ENCODE measurements at regions of chr1 and their contacts with region 1.

Region 1: DNA sequence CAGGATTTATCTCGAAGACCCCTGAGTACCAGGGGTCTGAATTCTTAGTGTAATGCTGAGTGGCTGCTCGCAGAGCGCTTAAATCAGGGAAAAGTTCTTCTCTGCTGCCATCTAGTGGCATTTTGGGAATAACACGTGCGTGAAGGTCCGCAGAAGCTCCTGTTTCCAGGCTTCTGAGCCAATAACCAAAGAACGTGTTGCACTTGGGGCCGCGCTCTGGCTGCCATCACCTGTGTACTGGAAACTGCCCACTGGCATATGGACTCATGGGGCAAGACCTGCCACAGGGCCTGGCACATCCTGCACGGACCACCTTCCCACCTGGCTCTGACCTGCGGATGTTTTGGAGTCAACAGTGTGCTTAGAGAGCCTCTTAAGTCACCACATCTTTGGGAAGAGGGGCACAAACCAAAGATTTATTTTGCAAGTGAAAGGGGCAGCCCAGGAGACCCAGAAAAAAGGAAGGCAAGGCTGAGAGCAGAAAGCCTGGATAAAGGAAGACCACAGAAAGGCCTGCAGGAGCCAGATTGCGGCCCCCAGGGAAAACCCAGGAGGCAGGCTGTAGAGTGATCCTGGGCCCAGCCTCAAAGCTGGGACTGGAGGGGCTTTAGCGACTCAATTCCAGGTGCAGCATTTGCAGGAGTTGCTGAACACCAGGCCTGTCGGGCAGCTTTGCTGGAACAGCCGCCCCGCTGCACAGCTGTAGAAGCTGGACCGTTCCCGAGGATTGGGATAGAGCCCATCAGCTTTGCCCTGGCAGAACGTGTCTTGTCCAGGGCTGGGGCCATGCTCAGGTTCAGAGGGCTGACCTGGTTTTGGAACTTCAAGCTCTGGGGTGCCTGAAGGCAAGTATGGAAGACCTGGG is 13.0 kb downstream of the CHIT1 start:
- DNase-seq: peak; percentile 60 to 65
- ATAC-seq: peak; percentile 75 to 92
- H3K4me3 ChIP-seq: no peak overlapping the region
- H3K27ac ChIP-seq: no peak overlapping the region
- H3K4me1 ChIP-seq: no peaks in the 10 kb centered on the region
- CTCF ChIP-seq: peak; percentile 90
- EP300 ChIP-seq: no peak
- POLR2A ChIP-seq: no peak
- RAD21 ChIP-seq: peak; percentile 84 to 92

Region 2: DNA sequence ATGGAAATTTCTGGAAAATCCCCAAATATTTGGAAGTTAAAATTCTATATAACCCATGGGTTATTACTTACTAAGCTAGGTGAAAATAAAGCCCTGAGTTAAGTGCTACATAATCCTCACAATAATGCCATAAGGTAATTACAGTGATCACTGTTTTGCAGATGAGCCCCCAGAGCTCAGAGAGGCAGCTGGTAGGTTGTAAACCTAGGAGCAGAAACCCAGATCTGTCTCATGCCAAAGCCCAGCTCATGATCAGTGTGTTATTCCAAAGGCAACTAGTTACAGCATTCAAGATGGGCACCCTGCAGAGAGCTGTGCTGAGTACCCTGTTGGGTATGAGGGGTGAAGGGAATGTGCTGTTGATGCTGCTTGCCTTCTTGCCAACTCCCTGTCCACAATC is 119.9 kb before region 1 on chr1:
- CTCF ChIA-PET with region 1: interaction called, 14 read pairs
- POLR2A ChIA-PET with region 1: no interaction called
- DNase-seq: no peak
- ATAC-seq: no peak
- H3K4me3 ChIP-seq: no peak overlapping the region
- H3K27ac ChIP-seq: no peak overlapping the region
- H3K4me1 ChIP-seq: no peaks in the 10 kb centered on the region
- CTCF ChIP-seq: no peak
- EP300 ChIP-seq: no peak
- POLR2A ChIP-seq: no peak
- RAD21 ChIP-seq: no peak

Region 3: DNA sequence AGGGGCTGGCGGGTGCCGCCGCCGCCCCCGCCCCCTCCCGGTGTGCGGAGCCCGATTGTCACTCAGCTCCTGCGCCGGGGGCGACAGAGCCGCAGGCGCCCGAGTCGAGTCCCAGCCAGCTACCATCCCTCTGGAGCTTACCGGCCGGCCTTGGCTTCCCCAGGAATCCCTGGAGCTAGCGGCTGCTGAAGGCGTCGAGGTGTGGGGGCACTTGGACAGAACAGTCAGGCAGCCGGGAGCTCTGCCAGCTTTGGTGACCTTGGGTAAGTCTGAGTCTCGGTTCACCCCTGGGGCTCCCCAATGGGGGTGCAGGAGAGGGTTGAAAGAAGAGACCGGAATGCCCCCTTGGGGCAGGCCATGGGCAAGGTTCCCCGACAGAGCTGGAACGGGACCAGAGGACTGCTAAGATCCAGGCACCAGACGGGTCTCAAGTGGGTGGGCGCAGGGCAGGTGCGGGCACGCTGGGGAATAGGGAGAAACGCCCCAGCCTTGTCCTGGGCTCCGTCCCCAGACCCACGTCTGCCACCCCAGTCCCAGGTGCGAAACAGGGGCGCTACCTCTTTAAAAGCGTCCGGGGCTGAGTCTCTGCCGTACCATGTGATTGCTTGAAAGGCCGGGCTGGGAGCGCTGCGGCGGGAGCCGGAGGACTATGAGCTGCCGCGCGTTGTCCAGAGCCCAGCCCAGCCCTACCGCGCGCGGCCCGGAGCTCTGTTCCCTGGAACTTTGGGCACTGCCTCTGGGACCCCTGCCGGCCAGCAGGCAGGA is 88.7 kb before region 1 on chr1 and contains the start of gene ADORA1:
- CTCF ChIA-PET with region 1: interaction called, 39 read pairs
- POLR2A ChIA-PET with region 1: no interaction called
- DNase-seq: peak; percentile 43 to 55
- ATAC-seq: peak; percentile 88 to 93
- H3K4me3 ChIP-seq: peak within 1 kb of the TSS; percentile 41
- H3K27ac ChIP-seq: peak within 1 kb of the TSS; percentile 32 to 67; a peak in 4 of 6 replicates
- H3K4me1 ChIP-seq: peaks cover 23% of the 10 kb centered on the region; the same call in 1 of the 3 replicates
- CTCF ChIP-seq: no peak
- EP300 ChIP-seq: no peak
- POLR2A ChIP-seq: no peak
- RAD21 ChIP-seq: no peak
- polyA plus RNA-seq, gene ADORA1: 0.48 and 0.50 TPM in 2 replicates

Region 4: GRCh38 chr1:203158960-203159665 is 57.4 kb before region 1 on chr1:
- CTCF ChIA-PET with region 1: interaction called, 24 read pairs
- POLR2A ChIA-PET with region 1: no interaction called
- DNase-seq: no peak
- ATAC-seq: no peak
- H3K4me3 ChIP-seq: no peak overlapping the region
- H3K27ac ChIP-seq: no peak overlapping the region
- H3K4me1 ChIP-seq: no peaks in the 10 kb centered on the region
- CTCF ChIP-seq: no peak
- EP300 ChIP-seq: no peak
- POLR2A ChIP-seq: no peak
- RAD21 ChIP-seq: no peak

Region 5: GRCh38 chr1:203177470-203178039 is 39.0 kb before region 1 on chr1:
- CTCF ChIA-PET with region 1: interaction called, 83 read pairs
- POLR2A ChIA-PET with region 1: no interaction called
- DNase-seq: peak; percentile 29 to 43
- ATAC-seq: peak; percentile 60 to 63
- H3K4me3 ChIP-seq: no peak overlapping the region
- H3K27ac ChIP-seq: peak overlapping the region; percentile 76 to 81
- H3K4me1 ChIP-seq: peaks cover 32% of the 10 kb centered on the region
- CTCF ChIP-seq: no peak
- EP300 ChIP-seq: no peak
- POLR2A ChIP-seq: no peak
- RAD21 ChIP-seq: no peak

Region 6: DNA sequence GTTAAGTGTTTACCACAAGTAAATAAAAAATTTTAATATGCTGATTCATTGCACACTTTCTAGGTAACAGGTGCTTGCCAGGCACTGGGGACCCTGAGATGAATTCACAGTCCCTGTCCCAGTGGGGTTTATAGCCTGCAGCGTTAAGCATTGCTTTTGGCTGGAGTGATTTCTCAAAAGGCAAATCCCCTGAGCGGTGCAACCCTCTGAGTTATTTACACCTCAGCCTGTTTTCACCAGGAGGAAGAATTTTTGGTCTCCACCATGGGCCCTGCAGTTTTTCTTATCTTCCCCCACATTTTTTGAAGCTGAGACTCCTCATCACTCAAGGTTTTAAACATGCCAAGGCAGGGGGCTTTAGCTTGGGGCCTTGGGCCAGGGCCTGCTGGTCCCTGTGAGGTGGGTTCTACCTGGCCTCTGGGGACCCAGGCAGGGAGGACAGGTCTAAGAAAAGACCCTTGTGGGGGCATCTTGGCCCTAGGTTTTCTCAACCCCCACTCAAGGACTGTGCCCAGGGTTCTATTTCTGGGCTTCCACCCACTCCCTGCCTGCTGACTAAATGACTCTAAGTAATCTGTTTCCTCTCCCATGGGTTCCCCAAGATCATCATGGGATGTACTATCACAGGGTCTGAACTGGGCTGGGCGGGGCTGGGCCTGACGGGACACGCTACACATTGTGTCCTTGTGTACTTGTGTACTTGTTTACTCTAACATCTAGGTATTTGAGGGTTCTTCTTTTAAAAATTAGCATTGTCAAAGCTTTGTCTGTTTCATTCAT is 23.2 kb after region 1 on chr1:
- CTCF ChIA-PET with region 1: interaction called, 19 read pairs
- POLR2A ChIA-PET with region 1: no interaction called
- DNase-seq: no peak
- ATAC-seq: no peak
- H3K4me3 ChIP-seq: no peak overlapping the region
- H3K27ac ChIP-seq: no peak overlapping the region
- H3K4me1 ChIP-seq: no peaks in the 10 kb centered on the region
- CTCF ChIP-seq: no peak
- EP300 ChIP-seq: no peak
- POLR2A ChIP-seq: no peak
- RAD21 ChIP-seq: no peak

Measured in A549 (cell line).